Vagina (tissue), 2 donors: ENCODE measurements at regions of chr12 and their contacts with region 1.

Region 1: DNA sequence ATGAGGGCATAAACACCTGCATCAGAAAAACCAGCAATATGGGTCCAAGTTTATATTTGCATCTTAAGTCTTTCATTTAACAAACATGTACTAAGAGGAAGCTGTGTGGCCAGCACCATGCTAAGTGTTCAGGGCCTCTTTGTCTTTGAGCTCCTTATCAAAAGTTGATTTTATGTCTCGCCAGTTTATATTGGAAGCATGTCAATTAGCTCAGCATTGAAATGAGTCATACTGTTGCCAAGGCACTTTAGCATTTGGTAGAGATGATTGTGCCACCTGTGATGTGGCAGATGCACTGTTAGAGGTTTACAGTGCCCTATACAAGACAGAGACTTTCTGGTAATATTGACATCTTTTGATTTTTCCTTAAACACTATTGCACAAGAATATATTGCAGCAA is 68.5 kb downstream of the BHLHE41 start:
- DNase-seq: no peak
- H3K4me3 ChIP-seq: no peak overlapping the region
- H3K27ac ChIP-seq: no peak overlapping the region
- H3K4me1 ChIP-seq: peaks cover 22% of the 10 kb centered on the region
- H3K27me3 ChIP-seq: no peaks in the 10 kb centered on the region
- CTCF ChIP-seq: no peak
- POLR2A ChIP-seq: no peak

Region 2: GRCh38 chr12:27975244-27976136 is 1919.2 kb after region 1 on chr12:
- intact Hi-C with region 1: loop called (anchors 5 kb)
- DNase-seq: no peak
- H3K4me3 ChIP-seq: peak overlapping the region; percentile 40 to 44
- H3K27ac ChIP-seq: peak overlapping the region; percentile 32
- H3K4me1 ChIP-seq: peaks cover 30% of the 10 kb centered on the region
- H3K27me3 ChIP-seq: no peaks in the 10 kb centered on the region
- CTCF ChIP-seq: no peak
- POLR2A ChIP-seq: no peak